ENCODE measurements at regions of chr7 and their contacts with region 1.

Region 1: DNA sequence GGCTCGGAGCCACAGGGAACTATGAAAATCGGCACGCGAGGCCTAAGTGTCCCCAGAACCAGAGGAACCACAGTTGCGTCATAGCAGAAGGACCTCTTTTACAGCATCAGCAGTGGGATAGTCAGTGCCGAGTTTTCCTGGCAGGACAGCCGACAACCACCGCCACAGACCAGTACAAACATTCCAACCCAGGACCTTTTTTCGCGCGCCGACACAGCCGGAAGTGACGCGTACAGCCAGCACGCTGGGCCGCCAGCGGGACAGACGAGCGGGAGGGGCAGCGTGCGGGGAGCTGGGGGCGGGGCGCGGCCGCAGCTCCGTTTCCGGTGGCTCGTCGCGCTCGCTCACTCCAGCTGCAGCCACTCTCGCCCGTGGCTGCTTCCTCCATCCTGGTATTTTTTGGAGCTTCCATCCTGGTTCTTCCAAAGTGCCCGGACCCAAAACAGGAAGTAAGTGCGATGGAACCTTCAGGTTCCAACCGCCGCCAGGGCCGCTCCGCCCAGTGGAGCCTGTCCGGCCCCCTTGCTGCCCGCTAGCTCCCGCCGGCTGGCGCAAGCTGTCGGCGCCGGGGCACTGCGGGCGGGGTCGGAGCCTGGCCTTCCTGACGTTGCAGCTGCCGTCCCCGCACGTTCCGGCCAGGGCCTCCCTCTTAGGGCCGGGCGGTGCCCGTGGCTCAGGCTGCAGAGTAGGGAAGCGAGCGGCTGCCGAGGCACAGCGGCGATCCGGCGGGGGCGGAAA is at the start of gene DMTF1:
- DNase-seq: peak; percentile 76 to 85 (median 83)
- ATAC-seq: peak; percentile 91
- H3K4me3 ChIP-seq: peak within 1 kb of the TSS; percentile 72
- H3K4me3 Mint-ChIP-seq: peak within 1 kb of the TSS; percentile 87 to 99 (median 97)
- H3K27ac ChIP-seq: peak within 1 kb of the TSS; percentile 95
- H3K27ac Mint-ChIP-seq: peak within 1 kb of the TSS; percentile 96 to 100 (median 98)
- H3K4me1 ChIP-seq: peaks cover 27% of the 10 kb centered on the region in 2 donors
- H3K4me1 Mint-ChIP-seq: peaks cover 25 to 53% (median 47%) of the 10 kb centered on the region in 7 donors
- H3K27me3 ChIP-seq: no peaks in the 10 kb centered on the region
- H3K27me3 Mint-ChIP-seq: no peaks in the 10 kb centered on the region
- total RNA-seq, gene DMTF1: 118 to 159 (median 131) TPM

Region 2: DNA sequence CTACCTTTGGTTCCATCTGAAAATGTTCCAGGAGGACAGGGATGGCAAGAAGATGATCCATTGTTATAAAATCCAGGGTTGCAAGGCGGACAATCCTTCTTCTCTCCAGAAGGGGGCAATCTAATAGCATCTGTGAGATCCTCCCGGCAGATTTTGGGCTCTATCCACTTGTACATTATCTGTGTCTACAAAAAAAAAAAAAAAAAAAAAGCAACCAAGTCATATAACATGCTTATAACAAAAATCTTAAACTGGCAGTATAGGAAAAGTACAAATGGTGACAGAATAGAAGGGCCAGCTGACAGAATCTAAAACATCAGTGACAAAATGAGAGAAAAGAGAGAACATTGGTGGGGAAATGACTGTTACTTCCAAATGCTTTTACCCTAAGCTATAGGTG is 225.5 kb before region 1 on chr7:
- CTCF ChIA-PET with region 1: interaction called, 8 read pairs
- POLR2A ChIA-PET with region 1: no interaction called
- intact Hi-C with region 1: loop called (anchors 1 kb)
- DNase-seq: peak in 7 of 9 donors; percentile 25 to 56 (median 38)
- ATAC-seq: peak; percentile 84
- H3K4me3 ChIP-seq: no peak overlapping the region
- H3K4me3 Mint-ChIP-seq: no peak overlapping the region
- H3K27ac ChIP-seq: no peak overlapping the region
- H3K27ac Mint-ChIP-seq: peak overlapping the region in 2 of 9 donors; percentile 28 to 53
- H3K4me1 ChIP-seq: no peaks in the 10 kb centered on the region
- H3K4me1 Mint-ChIP-seq: no peaks in the 10 kb centered on the region
- H3K27me3 ChIP-seq: no peaks in the 10 kb centered on the region
- H3K27me3 Mint-ChIP-seq: peaks cover 0 to 16% (median 4%) of the 10 kb centered on the region in 5 donors

Region 3: GRCh38 chr7:87059525-87060287 is 92.6 kb before region 1 on chr7 and contains the start of gene ELAPOR2:
- CTCF ChIA-PET with region 1: interaction called, 3 read pairs
- POLR2A ChIA-PET with region 1: interaction called, 3 read pairs
- intact Hi-C with region 1: loop called (anchors 1 kb)
- DNase-seq: peak; percentile 68 to 83 (median 75)
- ATAC-seq: peak; percentile 97
- H3K4me3 ChIP-seq: peak within 1 kb of the TSS; percentile 66
- H3K4me3 Mint-ChIP-seq: peak within 1 kb of the TSS; percentile 78 to 88 (median 84)
- H3K27ac ChIP-seq: peak within 1 kb of the TSS; percentile 52
- H3K27ac Mint-ChIP-seq: peak within 1 kb of the TSS in 8 of 9 donors; percentile 6 to 89 (median 70)
- H3K4me1 ChIP-seq: peaks cover 9 to 10% of the 10 kb centered on the region in 2 donors
- H3K4me1 Mint-ChIP-seq: peaks cover 7 to 18% (median 14%) of the 10 kb centered on the region in 7 donors
- H3K27me3 ChIP-seq: no peaks in the 10 kb centered on the region
- H3K27me3 Mint-ChIP-seq: peaks cover 9 to 23% (median 14%) of the 10 kb centered on the region in 5 donors
- total RNA-seq, gene ELAPOR2: 5.3 to 11.0 (median 6.4) TPM

Region 4: GRCh38 chr7:87213811-87214210 is 61.5 kb after region 1 on chr7:
- CTCF ChIA-PET with region 1: interaction called, 7 read pairs
- POLR2A ChIA-PET with region 1: interaction called, 188 read pairs
- intact Hi-C with region 1: loop called (anchors 1 kb)
- DNase-seq: no peak
- ATAC-seq: no peak
- H3K4me3 ChIP-seq: peak overlapping the region; percentile 13
- H3K4me3 Mint-ChIP-seq: peak overlapping the region; percentile 73 to 96 (median 87)
- H3K27ac ChIP-seq: peak overlapping the region; percentile 96
- H3K27ac Mint-ChIP-seq: peak overlapping the region; percentile 76 to 98 (median 95)
- H3K4me1 ChIP-seq: peaks cover 73 to 77% of the 10 kb centered on the region in 2 donors
- H3K4me1 Mint-ChIP-seq: peaks cover 42 to 90% (median 81%) of the 10 kb centered on the region in 7 donors
- H3K27me3 ChIP-seq: no peaks in the 10 kb centered on the region
- H3K27me3 Mint-ChIP-seq: no peaks in the 10 kb centered on the region

Region 5: DNA sequence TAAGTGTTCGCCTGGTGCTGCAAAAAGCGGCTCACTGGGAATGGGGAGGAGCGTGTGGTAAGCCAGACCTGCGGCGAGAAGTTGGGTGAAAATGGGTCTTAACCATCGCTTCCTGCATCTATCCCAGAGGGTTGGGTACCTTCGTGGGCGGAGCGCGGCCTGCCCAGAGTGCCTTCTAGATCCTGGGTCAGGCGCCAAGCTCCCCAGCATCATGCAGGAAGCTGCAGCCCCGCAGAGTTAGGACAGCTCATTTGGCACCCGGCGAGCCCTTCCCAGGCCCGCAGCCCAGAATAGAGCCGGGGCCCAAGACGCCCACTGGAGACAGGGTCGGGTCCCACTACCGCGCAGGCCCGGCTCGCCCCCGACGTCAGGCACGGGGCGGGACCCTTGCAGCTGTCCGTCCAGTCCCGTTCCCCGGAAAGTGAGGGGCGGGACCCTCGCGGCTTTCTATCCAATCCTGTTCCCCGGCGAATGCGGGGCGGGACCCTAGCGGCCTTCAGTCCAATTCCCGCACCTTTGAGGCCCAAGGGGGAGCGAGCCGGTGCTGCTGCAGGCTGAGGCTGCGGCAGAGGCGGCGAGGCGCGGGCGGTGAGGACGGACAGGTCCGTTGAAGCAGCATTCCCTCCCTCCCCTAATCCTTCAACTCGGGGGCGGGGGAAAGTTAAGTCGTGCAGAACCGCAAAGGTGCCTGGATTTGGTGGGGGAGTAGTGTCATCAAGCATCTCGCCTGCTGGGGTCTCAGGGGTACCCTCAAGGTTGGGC is 193.1 kb after region 1 on chr7 and contains the start of gene CROT:
- CTCF ChIA-PET with region 1: no interaction called
- POLR2A ChIA-PET with region 1: interaction called, 5 read pairs
- intact Hi-C with region 1: loop called (anchors 1 kb)
- DNase-seq: peak; percentile 85 to 94 (median 92)
- ATAC-seq: peak; percentile 99
- H3K4me3 ChIP-seq: peak within 1 kb of the TSS; percentile 86
- H3K4me3 Mint-ChIP-seq: peak within 1 kb of the TSS; percentile 81 to 100 (median 92)
- H3K27ac ChIP-seq: peak within 1 kb of the TSS; percentile 87
- H3K27ac Mint-ChIP-seq: peak within 1 kb of the TSS; percentile 88 to 98 (median 96)
- H3K4me1 ChIP-seq: peaks cover 10% of the 10 kb centered on the region in 2 donors
- H3K4me1 Mint-ChIP-seq: peaks cover 12 to 56% (median 46%) of the 10 kb centered on the region in 7 donors
- H3K27me3 ChIP-seq: no peaks in the 10 kb centered on the region
- H3K27me3 Mint-ChIP-seq: no peaks in the 10 kb centered on the region
- total RNA-seq, gene CROT: 7.7 to 15.2 (median 11.3) TPM

Region 6: DNA sequence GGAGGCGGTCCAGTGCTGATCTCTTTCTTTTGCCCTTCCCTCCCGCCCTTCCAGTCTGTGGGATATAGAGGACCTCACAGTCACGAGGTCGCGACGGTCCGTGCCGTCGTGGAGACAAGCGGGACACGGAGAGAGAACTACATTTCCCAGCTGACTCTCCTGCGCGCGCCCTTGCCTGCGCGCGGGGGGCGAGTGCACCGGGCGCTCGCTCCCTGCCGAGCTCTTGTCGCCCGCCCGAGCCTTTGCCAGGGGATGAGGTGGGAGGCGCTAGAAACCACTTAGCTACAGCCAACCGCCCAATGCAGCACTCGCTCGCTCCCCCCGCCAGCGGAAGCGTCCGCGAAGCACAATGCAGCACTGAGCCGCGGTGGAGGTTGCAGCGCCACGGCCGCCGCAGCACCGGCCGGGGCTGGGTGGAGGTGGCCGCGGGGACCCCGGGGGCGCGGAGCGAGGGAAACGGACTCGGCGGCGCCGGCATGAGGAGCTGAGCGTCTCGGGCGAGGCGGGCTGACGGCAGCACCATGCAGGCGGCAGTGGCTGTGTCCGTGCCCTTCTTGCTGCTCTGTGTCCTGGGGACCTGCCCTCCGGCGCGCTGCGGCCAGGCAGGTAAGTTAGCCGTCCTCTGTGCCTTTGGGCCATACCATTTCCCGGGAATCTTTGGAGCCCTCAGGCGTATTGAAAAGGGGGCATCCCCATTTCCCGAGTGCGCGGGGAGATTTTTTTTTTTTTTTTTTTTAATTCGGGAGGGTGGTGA is 781.8 kb after region 1 on chr7 and contains the start of gene ADAM22:
- CTCF ChIA-PET with region 1: no interaction called
- POLR2A ChIA-PET with region 1: no interaction called
- intact Hi-C with region 1: loop called in 1 of 2 experiments (anchors 5 kb)
- DNase-seq: peak; percentile 49 to 80 (median 74)
- ATAC-seq: peak; percentile 96
- H3K4me3 ChIP-seq: peak within 1 kb of the TSS; percentile 80
- H3K4me3 Mint-ChIP-seq: peak within 1 kb of the TSS; percentile 84 to 93 (median 91)
- H3K27ac ChIP-seq: peak within 1 kb of the TSS; percentile 19
- H3K27ac Mint-ChIP-seq: peak within 1 kb of the TSS in 7 of 9 donors; percentile 13 to 82 (median 65)
- H3K4me1 ChIP-seq: peaks cover 4 to 6% of the 10 kb centered on the region in 2 donors
- H3K4me1 Mint-ChIP-seq: peaks cover 0 to 21% (median 12%) of the 10 kb centered on the region in 7 donors
- H3K27me3 ChIP-seq: no peaks in the 10 kb centered on the region
- H3K27me3 Mint-ChIP-seq: peaks cover 0 to 54% (median 4%) of the 10 kb centered on the region in 5 donors
- total RNA-seq, gene ADAM22: 1.1 to 7.1 (median 3.1) TPM

Region 7: GRCh38 chr7:88302486-88302885 is 1150.2 kb after region 1 on chr7:
- CTCF ChIA-PET with region 1: no interaction called
- POLR2A ChIA-PET with region 1: no interaction called
- intact Hi-C with region 1: no loop called
- DNase-seq: no peak
- ATAC-seq: no peak
- H3K4me3 ChIP-seq: no peak overlapping the region
- H3K4me3 Mint-ChIP-seq: no peak overlapping the region
- H3K27ac ChIP-seq: no peak overlapping the region
- H3K27ac Mint-ChIP-seq: no peak overlapping the region
- H3K4me1 ChIP-seq: no peaks in the 10 kb centered on the region
- H3K4me1 Mint-ChIP-seq: peaks cover 0 to 6% (median 4%) of the 10 kb centered on the region in 7 donors
- H3K27me3 ChIP-seq: no peaks in the 10 kb centered on the region
- H3K27me3 Mint-ChIP-seq: peaks cover 30 to 54% (median 40%) of the 10 kb centered on the region in 5 donors

Measured in naive thymus-derived CD4-positive, alpha-beta T cell (primary cell).